H1 (cell line): ENCODE measurements at regions of chr7 and their contacts with region 1.

Region 1: GRCh38 chr7:106652909-106653308 is 8.0 kb downstream of the CCDC71L start:
- DNase-seq: no peak
- H3K4me3 ChIP-seq: no peak overlapping the region
- H3K27ac ChIP-seq: no peak overlapping the region
- H3K4me1 ChIP-seq: no peaks in the 10 kb centered on the region
- H3K27me3 ChIP-seq: no peaks in the 10 kb centered on the region
- CTCF ChIP-seq: no peak
- EP300 ChIP-seq: no peak
- POLR2A ChIP-seq: no peak
- RAD21 ChIP-seq: no peak

Region 2: GRCh38 chr7:106668861-106669524 is 16.1 kb after region 1 on chr7:
- CTCF ChIA-PET with region 1: no interaction called
- POLR2A ChIA-PET with region 1: no interaction called
- DNase-seq: no peak
- H3K4me3 ChIP-seq: no peak overlapping the region
- H3K27ac ChIP-seq: no peak overlapping the region
- H3K4me1 ChIP-seq: no peaks in the 10 kb centered on the region
- H3K27me3 ChIP-seq: no peaks in the 10 kb centered on the region
- CTCF ChIP-seq: no peak
- EP300 ChIP-seq: no peak
- POLR2A ChIP-seq: no peak
- RAD21 ChIP-seq: no peak

Region 3: GRCh38 chr7:106736508-106737201 is 83.7 kb after region 1 on chr7:
- CTCF ChIA-PET with region 1: interaction called, 27 read pairs
- POLR2A ChIA-PET with region 1: interaction called, 7 read pairs
- DNase-seq: peak in 1 of 2 experiments; percentile 60
- H3K4me3 ChIP-seq: no peak overlapping the region
- H3K27ac ChIP-seq: no peak overlapping the region
- H3K4me1 ChIP-seq: peaks cover 0 to 6% (median 5%) of the 10 kb centered on the region in 4 experiments; a peak in 5 of 7 replicates
- H3K27me3 ChIP-seq: no peaks in the 10 kb centered on the region
- CTCF ChIP-seq: peak in 2 of 3 experiments; percentile 82 to 83; a peak in 3 of 4 replicates
- EP300 ChIP-seq: peak in 1 of 2 experiments; percentile 15; a peak in 1 of 3 replicates
- POLR2A ChIP-seq: no peak
- RAD21 ChIP-seq: peak; percentile 78 to 83

Region 4: GRCh38 chr7:106870983-106871410 is 218.1 kb after region 1 on chr7:
- CTCF ChIA-PET with region 1: no interaction called
- POLR2A ChIA-PET with region 1: no interaction called
- DNase-seq: no peak
- H3K4me3 ChIP-seq: no peak overlapping the region
- H3K27ac ChIP-seq: no peak overlapping the region
- H3K4me1 ChIP-seq: no peaks in the 10 kb centered on the region
- H3K27me3 ChIP-seq: no peaks in the 10 kb centered on the region
- CTCF ChIP-seq: no peak
- EP300 ChIP-seq: no peak
- POLR2A ChIP-seq: no peak
- RAD21 ChIP-seq: no peak